Activated naive CD4-positive, alpha-beta T cell treated with anti-CD3 and anti-CD28 coated beads for 36 hours (primary cell): ENCODE measurements at regions of chr11 and their contacts with region 1.

Region 1: GRCh38 chr11:67265633-67266423 is 445 bp upstream of the GRK2 start:
- DNase-seq: peak; percentile 81
- H3K4me3 Mint-ChIP-seq: peak overlapping the region; percentile 72
- H3K27ac Mint-ChIP-seq: peak overlapping the region; percentile 87
- H3K4me1 Mint-ChIP-seq: peaks cover 72% of the 10 kb centered on the region
- H3K27me3 Mint-ChIP-seq: no peaks in the 10 kb centered on the region

Region 2: GRCh38 chr11:67239783-67240575 is 25.8 kb before region 1 on chr11:
- CTCF ChIA-PET with region 1: interaction called, 16 read pairs
- intact Hi-C with region 1: no loop called
- DNase-seq: peak; percentile 98
- H3K4me3 Mint-ChIP-seq: peak overlapping the region; percentile 86
- H3K27ac Mint-ChIP-seq: peak overlapping the region; percentile 99
- H3K4me1 Mint-ChIP-seq: peaks cover 46% of the 10 kb centered on the region
- H3K27me3 Mint-ChIP-seq: no peaks in the 10 kb centered on the region

Region 3: GRCh38 chr11:67288452-67289225 is 22.8 kb after region 1 on chr11:
- CTCF ChIA-PET with region 1: interaction called, 25 read pairs
- intact Hi-C with region 1: loop called (anchors 1 kb)
- DNase-seq: peak; percentile 95
- H3K4me3 Mint-ChIP-seq: peak overlapping the region; percentile 71
- H3K27ac Mint-ChIP-seq: peak overlapping the region; percentile 96
- H3K4me1 Mint-ChIP-seq: peaks cover 47% of the 10 kb centered on the region
- H3K27me3 Mint-ChIP-seq: no peaks in the 10 kb centered on the region

Region 4: DNA sequence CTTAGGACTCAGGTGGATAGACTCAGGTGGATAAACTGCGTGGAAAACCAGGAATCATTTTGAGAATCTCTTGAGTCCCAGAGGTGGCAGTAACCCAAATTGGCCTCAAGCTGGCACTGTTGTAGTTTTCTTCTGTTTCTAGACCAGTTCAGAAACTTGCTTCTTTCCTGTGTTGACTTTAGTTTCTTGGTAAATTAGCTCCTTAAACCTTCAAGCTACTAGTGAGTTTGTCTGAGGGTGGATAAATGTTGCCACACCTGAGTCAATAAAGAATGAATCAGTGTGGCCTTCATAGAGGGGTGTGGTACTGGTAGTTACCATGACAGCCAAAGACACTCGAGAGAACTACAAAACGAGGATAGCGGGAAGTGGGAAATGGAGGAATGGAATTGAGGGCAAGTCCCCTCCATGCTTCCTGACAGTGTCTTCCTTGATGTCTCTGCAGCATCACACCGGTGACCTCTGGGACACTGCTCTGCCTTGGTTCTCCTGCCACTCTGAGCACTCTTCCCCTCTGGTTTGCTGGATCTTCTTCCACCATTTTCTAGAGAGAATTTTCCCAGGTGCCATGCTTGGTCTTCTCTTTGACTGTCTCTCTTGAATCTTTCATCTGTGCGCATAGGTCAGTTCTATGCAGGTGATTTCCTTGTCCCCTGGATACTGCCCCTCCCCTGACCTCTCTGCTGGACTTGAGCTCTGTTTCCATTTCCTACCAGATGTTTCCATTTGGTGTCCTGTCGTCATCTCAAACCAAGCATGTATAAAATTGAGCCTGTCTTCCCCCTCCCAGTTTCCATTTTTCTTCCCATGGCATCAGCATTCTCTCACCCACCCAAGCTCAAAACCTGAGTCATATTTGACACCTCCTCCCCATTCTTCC is 80.3 kb after region 1 on chr11:
- CTCF ChIA-PET with region 1: interaction called, 23 read pairs
- intact Hi-C with region 1: no loop called
- DNase-seq: peak; percentile 59
- H3K4me3 Mint-ChIP-seq: no peak overlapping the region
- H3K27ac Mint-ChIP-seq: peak overlapping the region; percentile 90
- H3K4me1 Mint-ChIP-seq: peaks cover 60% of the 10 kb centered on the region
- H3K27me3 Mint-ChIP-seq: no peaks in the 10 kb centered on the region

Region 5: GRCh38 chr11:67401495-67402191 is 135.8 kb after region 1 on chr11 and contains the start of gene PPP1CA:
- CTCF ChIA-PET with region 1: no interaction called
- intact Hi-C with region 1: loop called (anchors 5 kb)
- DNase-seq: peak; percentile 91
- H3K4me3 Mint-ChIP-seq: peak within 1 kb of the TSS; percentile 72
- H3K27ac Mint-ChIP-seq: peak within 1 kb of the TSS; percentile 92
- H3K4me1 Mint-ChIP-seq: peaks cover 60% of the 10 kb centered on the region
- H3K27me3 Mint-ChIP-seq: no peaks in the 10 kb centered on the region
- total RNA-seq, gene PPP1CA: 202 to 204 TPM